MCF 10A (cell line): ENCODE measurements at regions of chr22 and their contacts with region 1.

Region 1: GRCh38 chr22:25362215-25362882 is 142.9 kb downstream of the CRYBB2 start:
- DNase-seq: peak; percentile 56
- H3K4me3 Mint-ChIP-seq: no peak overlapping the region
- H3K27ac Mint-ChIP-seq: no peak overlapping the region
- H3K4me1 Mint-ChIP-seq: peaks cover 6% of the 10 kb centered on the region
- H3K27me3 Mint-ChIP-seq: no peaks in the 10 kb centered on the region
- CTCF ChIP-seq: peak; percentile 84

Region 2: GRCh38 chr22:25350551-25350971 is 11.8 kb before region 1 on chr22:
- CTCF ChIA-PET with region 1: interaction called, 22 read pairs
- POLR2A ChIA-PET with region 1: no interaction called
- intact Hi-C with region 1: no loop called
- DNase-seq: no peak
- H3K4me3 Mint-ChIP-seq: no peak overlapping the region
- H3K27ac Mint-ChIP-seq: no peak overlapping the region
- H3K4me1 Mint-ChIP-seq: no peaks in the 10 kb centered on the region
- H3K27me3 Mint-ChIP-seq: no peaks in the 10 kb centered on the region
- CTCF ChIP-seq: no peak

Region 3: GRCh38 chr22:25380122-25380747 is 17.9 kb after region 1 on chr22:
- CTCF ChIA-PET with region 1: interaction called, 15 read pairs
- POLR2A ChIA-PET with region 1: interaction called, 4 read pairs
- intact Hi-C with region 1: no loop called
- DNase-seq: no peak
- H3K4me3 Mint-ChIP-seq: no peak overlapping the region
- H3K27ac Mint-ChIP-seq: no peak overlapping the region
- H3K4me1 Mint-ChIP-seq: no peaks in the 10 kb centered on the region
- H3K27me3 Mint-ChIP-seq: no peaks in the 10 kb centered on the region
- CTCF ChIP-seq: no peak

Region 4: DNA sequence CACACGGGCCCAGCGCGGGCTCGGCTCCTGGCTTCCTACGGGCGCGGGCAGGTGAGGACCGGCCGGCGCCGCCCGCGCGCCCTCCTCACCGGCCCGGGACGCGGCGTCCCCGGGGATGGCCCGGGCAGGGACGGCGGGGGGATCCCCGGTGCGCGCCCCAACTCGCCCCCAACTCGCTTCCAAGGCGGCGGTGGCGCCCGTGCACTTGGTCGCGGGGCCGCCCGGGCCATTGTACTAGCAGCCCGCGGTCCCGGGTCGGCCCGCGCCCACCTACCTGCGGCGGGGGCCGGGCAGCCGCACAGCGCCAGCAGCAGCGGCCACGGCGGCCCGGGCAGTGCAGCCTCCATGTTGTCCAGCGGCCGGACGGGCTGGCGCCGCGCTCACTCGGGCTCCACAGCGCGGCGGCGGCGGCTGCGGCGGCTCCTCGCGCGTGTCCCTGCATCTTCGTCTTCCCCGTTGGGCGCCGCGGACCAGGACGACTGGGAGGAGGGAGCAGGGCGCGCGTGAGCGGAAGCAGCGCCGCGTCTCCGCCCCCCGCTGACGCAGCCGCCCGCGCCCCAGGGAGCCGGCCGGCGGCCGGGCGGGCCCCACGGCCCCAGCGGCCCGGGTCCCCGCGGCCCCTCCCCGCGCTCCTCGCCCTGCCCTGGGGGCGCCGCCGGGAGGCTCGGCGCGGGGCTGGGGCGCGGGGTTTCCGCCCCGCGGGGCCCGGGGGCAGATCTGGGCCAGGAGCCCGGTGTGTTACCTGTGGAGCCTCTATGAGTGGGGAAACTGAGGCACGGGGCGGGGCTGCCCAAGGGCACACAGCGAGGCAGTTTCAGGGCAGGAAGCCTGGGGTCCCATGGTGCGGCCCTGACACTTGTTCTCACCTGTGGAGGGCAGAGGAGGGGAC is 42.8 kb after region 1 on chr22:
- CTCF ChIA-PET with region 1: interaction called, 5 read pairs
- POLR2A ChIA-PET with region 1: interaction called, 4 read pairs
- intact Hi-C with region 1: loop called (anchors 5 kb)
- DNase-seq: peak; percentile 57
- H3K4me3 Mint-ChIP-seq: peak overlapping the region; percentile 83
- H3K27ac Mint-ChIP-seq: no peak overlapping the region
- H3K4me1 Mint-ChIP-seq: peaks cover 23% of the 10 kb centered on the region
- H3K27me3 Mint-ChIP-seq: no peaks in the 10 kb centered on the region
- CTCF ChIP-seq: no peak

Region 5: GRCh38 chr22:25461301-25461700 is 99.0 kb after region 1 on chr22:
- CTCF ChIA-PET with region 1: no interaction called
- POLR2A ChIA-PET with region 1: no interaction called
- intact Hi-C with region 1: no loop called
- DNase-seq: no peak
- H3K4me3 Mint-ChIP-seq: no peak overlapping the region
- H3K27ac Mint-ChIP-seq: no peak overlapping the region
- H3K4me1 Mint-ChIP-seq: no peaks in the 10 kb centered on the region
- H3K27me3 Mint-ChIP-seq: no peaks in the 10 kb centered on the region
- CTCF ChIP-seq: no peak